ENCODE measurements at regions of chr6 and their contacts with region 1.

Region 1: DNA sequence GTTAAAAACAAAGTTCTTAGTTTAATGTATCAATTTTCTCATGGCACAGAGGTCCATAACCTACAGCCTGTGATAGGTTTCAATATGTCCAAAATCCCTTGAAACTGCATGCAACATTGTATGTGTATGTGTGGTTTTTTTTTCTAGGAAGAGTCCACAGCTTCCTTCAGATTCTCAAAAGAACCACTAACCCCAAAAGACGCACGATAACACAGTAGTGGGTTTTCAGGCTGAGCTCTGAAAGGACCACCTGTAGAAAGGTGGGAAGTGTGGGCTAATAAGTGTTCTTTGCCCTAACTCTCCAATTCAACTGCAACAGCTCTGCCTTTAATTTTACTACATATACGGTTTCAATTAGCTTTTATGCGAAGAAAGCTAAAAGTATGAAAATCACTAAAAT is 11.5 kb upstream of the KATNA1 start:
- DNase-seq: no peak
- ATAC-seq: no peak
- H3K4me3 ChIP-seq: no peak overlapping the region
- H3K27ac ChIP-seq: no peak overlapping the region
- H3K4me1 ChIP-seq: no peaks in the 10 kb centered on the region
- H3K27me3 ChIP-seq: no peaks in the 10 kb centered on the region
- CTCF ChIP-seq: no peak
- EP300 ChIP-seq: no peak
- POLR2A ChIP-seq: no peak
- RAD21 ChIP-seq: no peak

Region 2: DNA sequence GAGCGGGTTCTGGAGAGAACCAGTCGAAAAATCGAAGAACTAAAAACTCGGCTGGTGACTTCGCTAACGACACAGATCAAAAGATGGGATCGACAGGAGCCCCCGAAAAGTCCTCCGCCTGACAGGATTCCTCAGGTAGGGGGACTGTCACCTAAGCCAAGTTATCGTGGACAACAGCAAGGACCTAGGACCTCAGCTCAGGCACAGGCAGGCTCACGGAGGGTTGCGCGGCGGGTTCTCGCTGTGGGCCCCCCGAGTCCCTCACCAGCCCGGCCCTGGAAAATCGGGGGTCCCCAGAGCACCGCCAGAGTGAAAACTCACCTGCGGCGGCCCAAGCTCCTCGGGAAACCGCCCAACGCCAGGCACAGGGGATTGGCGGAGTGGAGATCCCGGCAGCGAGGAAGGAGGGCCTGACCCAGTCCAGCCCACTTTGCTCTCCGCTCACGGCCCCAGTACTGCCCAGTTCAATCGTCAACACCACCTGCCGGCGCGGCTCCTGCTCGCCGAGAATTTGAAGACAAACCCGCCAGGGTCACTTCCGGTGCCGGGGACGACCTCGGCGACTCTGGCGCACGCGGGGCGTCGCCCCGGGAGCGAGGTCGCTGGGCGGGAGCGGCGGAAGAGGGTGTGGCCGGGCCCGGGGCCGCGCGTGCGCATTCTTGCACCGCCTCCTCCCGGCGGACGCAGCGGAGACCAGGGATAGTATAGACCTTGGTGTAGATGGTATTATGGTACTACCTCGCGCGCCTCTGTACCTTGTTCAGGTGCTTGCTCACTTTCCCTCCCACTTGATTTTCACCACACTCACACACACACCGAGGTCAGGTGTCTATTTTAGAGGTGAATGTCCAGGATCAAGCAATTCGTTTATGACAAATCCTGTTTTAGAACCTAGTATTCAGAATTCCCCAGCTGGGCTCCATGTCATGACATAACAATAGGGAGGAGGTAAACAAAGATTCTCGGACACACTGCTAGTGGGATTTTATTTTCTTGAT is 11.6 kb before region 1 on chr6 and contains the start of gene KATNA1:
- CTCF ChIA-PET with region 1: no interaction called
- POLR2A ChIA-PET with region 1: interaction called, 24 read pairs
- in situ Hi-C with region 1: no loop called
- intact Hi-C with region 1: no loop called
- DNase-seq: peak; percentile 99
- ATAC-seq: peak; percentile 96
- H3K4me3 ChIP-seq: peak within 1 kb of the TSS; percentile 78
- H3K27ac ChIP-seq: peak within 1 kb of the TSS; percentile 95
- H3K4me1 ChIP-seq: peaks cover 8 to 16% of the 10 kb centered on the region in 2 experiments; a peak in 4 of 5 replicates
- H3K27me3 ChIP-seq: no peaks in the 10 kb centered on the region
- CTCF ChIP-seq: peak; percentile 22 to 46 (median 33); a peak in 3 of 6 replicates
- EP300 ChIP-seq: peak; percentile 55
- POLR2A ChIP-seq: peak; percentile 94
- RAD21 ChIP-seq: peak in 1 of 2 experiments; percentile 25; a peak in 1 of 4 replicates
- polyA plus RNA-seq, gene KATNA1: 22.5 to 33.3 TPM

Measured in K562 (cell line).